HEK293 (cell line): ENCODE measurements at regions of chr2 and their contacts with region 1.

Region 1: DNA sequence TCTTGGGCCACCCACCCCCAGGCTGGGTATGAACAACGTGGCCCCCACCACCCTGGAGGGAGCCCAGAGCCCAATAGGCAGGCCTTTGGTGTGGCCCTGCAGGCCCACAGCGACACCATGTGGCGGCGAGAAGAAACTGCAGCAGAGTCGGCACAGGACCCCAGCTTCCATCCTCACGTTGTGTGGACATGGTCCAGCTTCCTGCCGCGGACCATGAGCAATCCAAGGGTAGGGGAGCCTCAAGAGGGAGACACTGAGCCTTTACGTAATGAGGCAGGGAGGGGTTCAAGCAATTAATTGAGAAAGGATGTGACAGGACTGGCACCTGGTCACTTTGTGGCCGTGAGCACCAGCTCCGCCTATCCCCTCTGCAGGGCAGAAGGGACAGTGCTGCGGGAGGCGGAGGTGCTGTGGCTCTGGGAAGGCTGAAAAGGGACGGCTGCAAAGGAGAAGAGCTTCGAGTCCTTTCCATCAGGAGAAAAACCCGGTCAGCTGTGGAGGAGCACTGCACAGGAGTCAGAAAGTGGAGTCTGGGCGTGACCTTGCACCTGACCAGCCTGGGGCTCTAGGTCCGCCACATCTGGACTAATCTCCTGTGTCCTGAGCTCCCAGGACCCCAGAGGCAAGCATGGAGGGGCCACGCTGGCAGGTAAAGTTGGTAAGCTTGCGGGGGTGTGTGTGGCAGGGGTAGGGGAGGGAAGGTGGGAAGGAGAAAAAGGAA is 44.8 kb downstream of the TMEM37 start:
- H3K4me3 ChIP-seq: no peak overlapping the region
- H3K27ac ChIP-seq: no peak overlapping the region
- H3K4me1 ChIP-seq: no peaks in the 10 kb centered on the region
- CTCF ChIP-seq: peak; percentile 95

Region 2: DNA sequence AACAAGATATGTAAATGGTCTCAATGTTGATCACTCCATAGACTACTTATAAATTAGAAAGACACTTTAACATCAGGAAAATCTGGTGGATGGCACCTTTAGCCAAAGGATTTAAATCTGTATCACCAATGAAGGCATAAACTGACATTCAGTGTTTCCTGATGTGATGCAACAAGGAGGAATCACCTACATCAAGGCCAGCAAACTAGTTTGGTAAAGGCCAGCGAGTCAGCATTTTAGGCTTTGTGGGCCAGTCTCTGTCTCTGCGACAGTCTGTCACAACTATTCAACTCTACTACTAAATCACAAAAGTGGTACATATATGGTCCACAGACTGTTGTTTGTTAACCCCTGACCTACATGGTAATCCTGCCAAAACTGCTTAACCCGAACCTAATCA is 143.1 kb before region 1 on chr2:
- CTCF ChIA-PET with region 1: no interaction called
- POLR2A ChIA-PET with region 1: no interaction called
- H3K4me3 ChIP-seq: no peak overlapping the region
- H3K27ac ChIP-seq: no peak overlapping the region
- H3K4me1 ChIP-seq: no peaks in the 10 kb centered on the region
- CTCF ChIP-seq: no peak

Region 3: DNA sequence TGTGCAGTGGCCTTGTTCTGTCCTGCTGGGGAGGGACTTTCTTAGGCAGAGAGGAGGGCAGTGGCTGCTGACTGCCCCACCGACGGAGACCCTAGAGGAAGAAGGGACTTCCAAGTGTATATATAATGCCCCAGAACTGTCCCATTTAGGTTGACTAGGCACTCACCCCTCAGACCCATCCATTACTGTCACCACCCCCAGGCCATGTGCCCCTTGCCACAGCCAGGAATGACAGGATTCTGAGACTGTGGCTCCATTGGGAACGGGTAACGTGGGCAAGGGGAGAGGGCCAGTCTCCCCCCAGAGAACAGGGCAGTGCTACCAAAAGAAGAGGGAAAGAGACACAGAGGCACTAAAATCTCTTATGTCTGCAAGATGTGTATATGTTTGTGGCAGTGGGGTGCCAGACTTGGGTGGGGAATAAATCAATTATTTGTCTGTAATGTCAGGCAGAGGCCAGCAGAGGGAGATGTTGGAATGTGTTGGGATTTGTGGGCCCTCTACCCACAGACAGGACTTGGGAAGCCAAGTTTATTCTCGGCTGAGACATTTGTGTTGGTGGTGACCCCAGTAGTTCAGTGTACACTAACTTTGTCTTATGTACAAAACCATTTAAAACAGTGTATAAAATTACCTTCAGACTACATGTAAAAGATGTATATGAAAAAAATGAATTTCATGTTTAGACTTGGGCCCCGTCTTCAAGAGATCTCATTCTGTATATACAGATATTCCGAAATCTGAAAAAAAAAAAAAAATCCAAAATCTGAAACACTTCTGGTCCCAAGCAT is 68.8 kb before region 1 on chr2:
- CTCF ChIA-PET with region 1: interaction called, 64 read pairs
- POLR2A ChIA-PET with region 1: interaction called, 6 read pairs
- H3K4me3 ChIP-seq: no peak overlapping the region
- H3K27ac ChIP-seq: no peak overlapping the region
- H3K4me1 ChIP-seq: no peaks in the 10 kb centered on the region
- CTCF ChIP-seq: peak; percentile 57

Region 4: GRCh38 chr2:119459841-119460475 is 16.5 kb before region 1 on chr2:
- CTCF ChIA-PET with region 1: interaction called, 20 read pairs
- POLR2A ChIA-PET with region 1: no interaction called
- H3K4me3 ChIP-seq: no peak overlapping the region
- H3K27ac ChIP-seq: no peak overlapping the region
- H3K4me1 ChIP-seq: no peaks in the 10 kb centered on the region
- CTCF ChIP-seq: no peak

Region 5: DNA sequence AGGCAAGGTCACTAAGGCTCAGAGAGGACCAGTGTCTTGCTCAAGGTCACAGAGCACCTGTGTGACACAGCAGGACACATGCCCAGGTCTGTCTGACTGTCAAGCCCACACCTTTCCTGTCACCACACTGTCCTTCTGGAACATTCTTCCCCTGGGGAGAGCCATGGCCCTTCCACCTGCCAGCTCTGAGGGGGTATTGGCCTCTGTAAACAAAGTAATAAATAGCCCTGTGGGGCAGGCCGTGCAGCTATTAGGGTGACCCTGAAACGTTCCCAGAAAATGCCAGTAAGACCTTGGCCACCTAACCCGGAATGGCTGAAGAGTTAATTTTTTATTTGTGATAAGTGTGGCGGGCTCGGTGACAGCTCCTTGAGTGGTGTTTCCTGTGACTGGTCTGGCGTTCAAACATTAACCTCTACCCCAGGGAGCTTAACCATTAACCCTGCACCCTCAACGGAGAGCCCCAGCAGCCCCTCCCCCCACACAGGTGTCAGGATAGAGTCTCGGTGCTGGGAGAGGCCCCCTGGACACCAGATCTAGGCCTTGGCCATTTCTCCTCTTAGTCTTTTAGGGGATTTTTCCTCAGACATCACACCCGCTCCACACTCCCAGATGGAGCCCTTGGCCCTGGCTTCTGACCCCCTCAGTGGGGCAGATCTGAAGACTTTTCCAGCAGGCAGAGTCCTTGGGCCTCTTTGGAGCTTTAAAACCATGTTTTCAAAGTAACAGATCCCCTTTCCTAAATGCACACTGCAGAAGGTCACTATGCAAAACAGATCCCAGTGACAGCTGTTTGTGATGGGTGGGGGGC is 11.2 kb after region 1 on chr2:
- CTCF ChIA-PET with region 1: interaction called, 42 read pairs
- POLR2A ChIA-PET with region 1: no interaction called
- H3K4me3 ChIP-seq: no peak overlapping the region
- H3K27ac ChIP-seq: no peak overlapping the region
- H3K4me1 ChIP-seq: no peaks in the 10 kb centered on the region
- CTCF ChIP-seq: no peak